MCF 10A (cell line): ENCODE measurements at regions of chr7 and their contacts with region 1.

Region 1: GRCh38 chr7:5396999-5397663 is 26.5 kb downstream of the TNRC18 start:
- DNase-seq: peak; percentile 97
- H3K4me3 Mint-ChIP-seq: peak overlapping the region; percentile 69
- H3K27ac Mint-ChIP-seq: peak overlapping the region; percentile 86
- H3K4me1 Mint-ChIP-seq: peaks cover 13% of the 10 kb centered on the region
- H3K27me3 Mint-ChIP-seq: no peaks in the 10 kb centered on the region
- CTCF ChIP-seq: no peak

Region 2: DNA sequence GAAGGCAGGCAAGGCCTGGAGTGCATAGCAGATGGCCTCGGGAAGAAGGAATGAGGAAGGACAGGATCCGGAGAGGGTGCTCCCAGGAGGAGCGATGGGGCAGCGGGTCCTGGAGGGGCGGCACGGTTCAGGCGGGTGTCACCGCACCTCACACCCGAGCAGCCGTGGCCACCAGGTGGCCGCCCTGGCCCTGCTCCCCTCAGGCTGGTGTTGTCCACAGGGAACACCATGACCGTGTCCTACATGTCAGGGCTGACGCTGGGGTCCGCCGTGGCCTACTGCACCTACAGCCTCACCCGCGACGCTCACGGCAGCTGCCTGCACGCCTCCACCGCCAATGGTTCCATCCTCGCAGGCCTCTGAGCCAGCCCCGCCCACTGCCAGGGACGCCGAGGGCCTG is 94.6 kb before region 1 on chr7:
- CTCF ChIA-PET with region 1: no interaction called
- POLR2A ChIA-PET with region 1: no interaction called
- intact Hi-C with region 1: no loop called
- DNase-seq: no peak
- H3K4me3 Mint-ChIP-seq: no peak overlapping the region
- H3K27ac Mint-ChIP-seq: no peak overlapping the region
- H3K4me1 Mint-ChIP-seq: no peaks in the 10 kb centered on the region
- H3K27me3 Mint-ChIP-seq: peaks cover 10% of the 10 kb centered on the region
- CTCF ChIP-seq: no peak

Region 3: GRCh38 chr7:5363729-5364128 is 33.4 kb before region 1 on chr7:
- CTCF ChIA-PET with region 1: interaction called, 16 read pairs
- POLR2A ChIA-PET with region 1: interaction called, 5 read pairs
- intact Hi-C with region 1: no loop called
- DNase-seq: no peak
- H3K4me3 Mint-ChIP-seq: no peak overlapping the region
- H3K27ac Mint-ChIP-seq: no peak overlapping the region
- H3K4me1 Mint-ChIP-seq: no peaks in the 10 kb centered on the region
- H3K27me3 Mint-ChIP-seq: no peaks in the 10 kb centered on the region
- CTCF ChIP-seq: no peak

Region 4: GRCh38 chr7:5406957-5407945 is 10.1 kb after region 1 on chr7:
- CTCF ChIA-PET with region 1: interaction called, 7 read pairs
- POLR2A ChIA-PET with region 1: interaction called, 35 read pairs
- intact Hi-C with region 1: no loop called
- DNase-seq: no peak
- H3K4me3 Mint-ChIP-seq: no peak overlapping the region
- H3K27ac Mint-ChIP-seq: no peak overlapping the region
- H3K4me1 Mint-ChIP-seq: peaks cover 26% of the 10 kb centered on the region
- H3K27me3 Mint-ChIP-seq: no peaks in the 10 kb centered on the region
- CTCF ChIP-seq: no peak

Region 5: DNA sequence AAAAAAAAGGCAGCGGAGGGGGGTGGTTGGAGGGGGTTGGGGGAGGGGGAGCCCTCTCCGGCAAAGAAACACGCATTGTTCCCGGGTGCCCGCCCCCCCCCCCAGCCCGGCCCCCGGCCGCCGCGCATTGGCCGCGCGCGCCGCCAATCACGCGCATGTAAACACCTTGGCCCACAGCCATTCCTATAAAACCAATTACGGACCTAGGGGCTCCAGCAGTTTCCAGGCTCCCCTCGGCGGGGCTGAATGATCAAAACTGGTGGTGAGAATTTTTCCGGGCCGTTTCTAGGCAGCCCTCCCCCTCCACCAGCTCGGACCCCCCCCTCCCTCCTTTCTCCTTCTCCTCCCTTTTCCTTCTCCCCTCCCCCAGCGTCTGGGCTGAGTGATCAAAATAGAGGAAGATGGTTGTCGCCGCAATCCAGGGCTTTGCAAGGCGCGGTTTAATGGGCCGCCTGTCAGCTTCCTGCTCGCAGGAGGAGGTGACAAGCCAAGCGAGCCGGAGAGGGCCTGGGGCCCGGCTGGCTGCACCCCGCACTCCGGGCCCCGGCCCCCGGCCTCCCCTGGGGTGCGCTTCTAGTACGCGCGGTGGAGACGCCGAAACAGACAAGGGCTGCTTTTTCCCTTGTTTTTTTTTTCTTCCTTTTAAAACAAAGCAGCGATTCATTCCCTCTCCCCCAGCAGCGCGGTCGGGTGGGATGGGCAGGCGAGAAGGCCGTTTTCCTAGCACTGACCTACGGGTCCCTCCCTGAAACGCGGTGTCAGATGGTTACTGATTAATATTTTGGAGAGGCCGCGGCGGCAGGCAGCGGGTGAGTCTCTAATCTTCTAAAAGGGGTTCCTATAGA is 26.9 kb after region 1 on chr7:
- CTCF ChIA-PET with region 1: interaction called, 16 read pairs
- POLR2A ChIA-PET with region 1: no interaction called
- intact Hi-C with region 1: loop called (anchors 1 kb)
- DNase-seq: peak; percentile 99
- H3K4me3 Mint-ChIP-seq: peak overlapping the region; percentile 98
- H3K27ac Mint-ChIP-seq: peak overlapping the region; percentile 94
- H3K4me1 Mint-ChIP-seq: no peaks in the 10 kb centered on the region
- H3K27me3 Mint-ChIP-seq: no peaks in the 10 kb centered on the region
- CTCF ChIP-seq: no peak

Region 6: DNA sequence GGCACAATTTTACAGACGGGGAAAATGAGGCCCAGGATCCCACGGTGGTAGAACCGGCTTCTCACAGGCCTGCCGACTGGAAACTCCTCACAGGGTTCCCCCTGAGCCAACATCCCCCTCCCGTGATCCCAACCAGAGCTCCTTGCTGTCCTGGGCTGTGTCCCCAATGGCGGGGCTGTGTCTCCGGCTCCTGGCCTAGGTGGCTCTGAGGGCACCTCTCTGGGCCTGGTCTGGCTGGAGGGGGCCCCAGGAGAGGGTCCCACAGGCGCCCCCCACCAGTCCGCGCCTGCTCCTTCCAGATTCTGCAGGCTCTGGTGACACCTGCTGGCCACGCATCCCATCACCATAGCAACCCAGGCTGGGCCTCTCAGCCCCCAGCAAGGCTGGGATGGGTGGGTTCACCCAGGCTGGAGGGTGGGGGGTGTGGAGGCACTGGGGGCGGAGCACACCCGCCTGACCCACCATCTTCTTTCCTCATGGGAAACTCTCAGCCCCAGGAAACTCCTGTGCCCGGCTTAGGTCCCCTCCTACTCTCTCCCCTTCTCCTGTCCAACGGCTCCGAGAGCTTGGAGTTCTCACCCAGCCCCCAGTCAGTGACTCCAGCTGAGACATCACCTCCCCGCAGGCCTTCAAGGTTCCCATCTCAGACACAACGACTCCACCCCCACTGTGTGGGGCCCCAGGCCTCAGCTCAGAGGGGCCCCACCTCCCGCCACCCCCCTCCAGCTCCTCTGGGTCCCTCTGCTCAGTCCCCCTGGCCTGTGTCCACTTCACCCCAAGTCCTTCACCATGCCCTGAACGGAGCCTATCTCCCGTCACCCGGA is 53.6 kb after region 1 on chr7:
- CTCF ChIA-PET with region 1: interaction called, 6 read pairs
- POLR2A ChIA-PET with region 1: interaction called, 11 read pairs
- intact Hi-C with region 1: loop called (anchors 1 kb)
- DNase-seq: peak; percentile 46
- H3K4me3 Mint-ChIP-seq: no peak overlapping the region
- H3K27ac Mint-ChIP-seq: no peak overlapping the region
- H3K4me1 Mint-ChIP-seq: peaks cover 7% of the 10 kb centered on the region
- H3K27me3 Mint-ChIP-seq: no peaks in the 10 kb centered on the region
- CTCF ChIP-seq: peak; percentile 56